ENCODE measurements at regions of chr14 and their contacts with region 1.

Region 1: DNA sequence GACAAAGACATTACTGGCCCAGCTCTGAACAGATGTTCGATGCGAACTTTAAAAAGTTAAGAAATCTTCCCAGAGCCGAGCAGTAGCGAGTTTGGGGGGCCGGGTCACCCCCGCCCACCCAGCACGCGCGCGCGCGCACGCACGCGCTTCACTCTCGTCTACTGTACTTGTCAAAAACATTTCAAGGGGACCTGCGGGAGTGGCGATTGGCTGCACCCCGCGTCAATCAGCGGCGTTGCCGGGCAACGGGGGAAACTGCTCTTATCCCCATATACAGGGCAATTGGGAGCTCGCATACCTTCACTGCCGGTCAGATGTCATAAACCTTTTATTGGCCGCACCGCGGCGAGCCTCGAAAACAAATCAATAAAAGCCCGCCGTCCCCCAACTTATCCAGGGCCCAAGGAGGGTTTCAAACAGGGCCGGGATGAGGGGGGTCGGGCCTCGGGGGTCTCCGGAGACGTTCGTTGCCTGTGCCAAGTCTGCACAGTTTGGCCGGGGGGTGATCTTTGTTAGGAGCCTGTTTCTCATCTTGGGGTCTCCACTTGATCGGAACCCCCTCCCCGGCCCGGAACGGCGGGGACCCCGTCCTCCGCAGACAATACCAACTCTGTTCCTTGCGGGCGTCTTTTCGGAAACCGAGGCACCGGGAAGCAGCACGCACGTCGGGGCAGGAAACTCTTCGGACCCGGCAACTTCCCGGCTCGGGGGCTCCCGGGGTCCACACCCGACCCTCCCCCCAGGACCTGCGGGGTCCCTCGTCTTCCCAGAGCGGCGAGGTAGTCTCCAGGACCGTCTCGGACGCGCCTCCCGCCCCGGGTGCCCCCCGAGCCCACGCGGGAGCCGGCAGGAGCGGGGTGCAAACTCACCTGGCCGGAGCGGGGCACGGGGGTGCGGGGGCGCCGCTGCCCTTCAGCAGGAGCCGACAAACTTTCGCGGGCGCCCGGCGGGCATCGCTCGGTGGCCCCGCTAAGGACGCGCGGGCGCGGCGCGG is 734 bp downstream of the FOXN3 start:
- DNase-seq: peak; percentile 97
- ATAC-seq: peak; percentile 86

Region 2: GRCh38 chr14:89175881-89176799 is 240.2 kb before region 1 on chr14:
- intact Hi-C with region 1: loop called (anchors 2 kb)
- DNase-seq: no peak
- ATAC-seq: peak; percentile 51

Region 3: GRCh38 chr14:89221109-89221810 is 195.0 kb before region 1 on chr14:
- intact Hi-C with region 1: loop called (anchors 5 kb)
- DNase-seq: no peak
- ATAC-seq: peak; percentile 88

Region 4: GRCh38 chr14:89317051-89317691 is 99.1 kb before region 1 on chr14:
- intact Hi-C with region 1: no loop called
- DNase-seq: no peak
- ATAC-seq: no peak

Region 5: DNA sequence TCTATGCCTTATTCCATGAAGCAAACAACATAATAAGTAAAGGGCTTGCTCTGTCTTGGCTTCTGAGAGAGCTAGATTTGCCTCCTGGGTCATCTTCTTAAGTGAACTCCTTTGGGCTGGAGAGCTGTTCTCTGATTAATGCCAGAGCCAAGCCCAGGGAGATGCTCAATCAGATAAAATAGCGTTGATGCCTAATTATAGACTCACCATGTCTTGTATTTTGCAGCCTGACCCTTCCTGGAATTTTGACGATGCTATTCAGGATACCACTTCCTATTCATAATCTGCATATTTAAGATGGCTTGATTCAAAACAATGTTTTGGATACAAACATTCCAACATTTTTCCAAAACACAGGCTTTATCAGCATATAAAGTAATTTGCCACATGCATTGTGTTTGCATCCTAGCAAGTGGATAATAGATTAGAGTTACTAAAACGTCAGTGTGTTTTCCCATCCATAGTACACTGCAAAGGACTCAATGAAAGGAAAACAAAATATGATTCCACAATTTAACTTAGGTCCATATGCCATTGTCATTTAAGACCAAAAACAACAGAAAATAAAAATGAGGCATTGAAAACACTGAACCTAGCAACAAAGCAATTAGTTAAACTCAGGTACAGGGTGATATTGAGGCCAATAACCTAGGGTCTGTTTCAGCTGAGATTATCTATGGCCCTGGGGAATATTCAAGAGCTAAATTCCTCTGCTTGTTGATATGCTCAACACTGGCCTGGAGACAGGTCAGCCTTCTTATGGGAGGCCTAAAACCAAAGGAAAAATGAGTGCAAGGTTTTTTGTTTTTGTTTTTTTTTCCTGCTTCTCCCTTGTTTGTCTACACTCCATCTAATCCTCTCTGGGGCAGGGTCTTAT is 184.9 kb after region 1 on chr14:
- intact Hi-C with region 1: loop called (anchors 5 kb)
- DNase-seq: no peak
- ATAC-seq: no peak

Region 6: GRCh38 chr14:89701211-89702043 is 285.1 kb after region 1 on chr14:
- intact Hi-C with region 1: loop called (anchors 5 kb)
- DNase-seq: peak; percentile 96
- ATAC-seq: peak; percentile 94